ENCODE measurements at regions of chr19 and their contacts with region 1.

Region 1: DNA sequence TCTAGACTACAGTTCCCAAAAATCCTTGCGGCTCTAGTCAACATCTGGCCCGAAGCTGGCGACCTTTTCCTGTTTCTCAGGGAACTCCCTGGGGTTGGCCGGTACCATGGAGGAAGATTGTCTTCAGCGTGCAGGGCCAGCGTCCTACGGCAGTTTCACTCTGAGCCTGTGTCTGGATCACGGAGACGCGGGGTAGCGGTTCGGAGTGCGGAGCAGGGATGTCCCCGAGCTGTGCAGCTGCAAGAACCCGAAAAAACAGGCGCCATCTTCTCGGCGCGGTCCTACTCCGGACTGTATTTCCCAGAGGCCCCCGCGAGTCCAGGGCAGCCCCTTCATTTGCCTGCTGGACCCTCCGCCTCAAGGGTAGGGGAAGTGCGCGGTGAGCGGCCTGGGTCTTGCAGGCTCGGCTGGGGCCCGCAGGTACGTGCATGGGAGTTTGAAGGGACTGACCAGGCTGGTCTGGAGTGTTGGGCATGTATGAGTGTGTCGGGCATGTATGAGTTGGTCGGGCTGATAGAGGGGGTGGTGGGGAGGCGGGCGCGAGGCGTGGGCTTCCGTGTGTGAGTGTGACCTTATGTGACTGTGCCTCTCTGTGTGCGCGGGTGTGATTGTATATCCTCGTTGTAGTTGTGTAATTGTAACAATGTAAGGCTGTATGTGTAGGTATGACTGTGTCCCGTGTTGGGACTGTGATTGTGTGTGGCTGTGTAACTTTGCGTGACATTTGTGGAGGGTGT is at the start of gene ZNF383:
- DNase-seq: peak; percentile 70 to 75 (median 72)
- H3K4me3 ChIP-seq: peak within 1 kb of the TSS; percentile 92 to 100 (median 94)
- H3K4me3 Mint-ChIP-seq: peak within 1 kb of the TSS; percentile 99
- H3K27ac ChIP-seq: peak within 1 kb of the TSS; percentile 71 to 92
- H3K27ac Mint-ChIP-seq: peak within 1 kb of the TSS; percentile 92 to 99 (median 94)
- H3K4me1 ChIP-seq: peaks cover 10 to 16% of the 10 kb centered on the region in 2 donors
- H3K4me1 Mint-ChIP-seq: peaks cover 16% of the 10 kb centered on the region
- H3K27me3 ChIP-seq: no peaks in the 10 kb centered on the region
- H3K27me3 Mint-ChIP-seq: peaks cover 0 to 4% (median 2%) of the 10 kb centered on the region in 3 donors
- CTCF ChIP-seq: no peak
- polyA plus RNA-seq, gene ZNF383: 2.8 to 4.2 (median 3.5) TPM

Region 2: DNA sequence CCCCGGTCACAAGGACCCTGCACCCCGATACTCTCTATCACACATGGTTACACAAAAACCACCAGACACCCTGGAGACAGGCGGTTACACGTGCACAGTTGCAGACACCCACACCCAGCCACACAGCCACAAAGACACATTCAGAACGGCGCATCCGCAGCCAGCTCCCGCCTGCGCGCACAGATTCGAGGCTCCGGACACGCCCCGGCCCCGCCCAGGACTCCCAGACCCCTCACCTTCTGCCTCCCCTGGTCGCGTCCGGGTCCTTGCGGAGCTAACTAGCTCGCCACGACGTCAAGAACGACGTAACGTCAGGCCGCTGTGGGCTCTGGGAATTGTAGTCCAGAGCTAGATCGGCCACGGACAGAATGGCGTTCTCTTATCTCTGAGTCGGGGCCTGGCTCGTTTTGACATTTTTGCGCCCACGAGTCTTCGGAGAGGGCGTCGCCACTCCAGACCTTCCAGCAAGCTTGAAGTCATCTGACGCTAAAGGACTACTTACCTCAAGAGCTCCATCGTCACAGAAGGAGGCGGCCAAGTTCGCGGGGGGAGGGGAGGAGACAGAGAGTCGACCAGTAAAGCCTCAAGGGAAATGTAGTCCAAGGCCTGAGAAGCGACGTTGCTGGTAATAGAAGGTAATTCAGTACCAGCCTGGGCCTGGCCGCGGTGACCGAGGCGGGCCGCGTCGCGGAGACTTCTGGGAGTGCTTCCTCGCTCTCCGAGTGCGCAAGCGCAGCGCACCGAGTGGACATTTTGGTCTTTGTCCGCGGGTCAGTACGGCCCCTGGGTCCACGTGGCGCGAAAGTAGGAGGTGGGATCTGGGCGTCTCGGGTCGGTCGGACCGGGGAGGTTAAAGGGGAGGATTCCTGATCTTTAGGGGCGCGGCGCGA is 1003.4 kb before region 1 on chr19 and contains the starts of genes ZNF146 and ZNF565:
- intact Hi-C with region 1: loop called in 1 of 2 experiments (anchors 10 kb)
- DNase-seq: peak; percentile 96 to 99 (median 96)
- H3K4me3 ChIP-seq: peak within 1 kb of the TSS; percentile 61 to 92 (median 69)
- H3K4me3 Mint-ChIP-seq: no peak within 1 kb of the TSS
- H3K27ac ChIP-seq: peak within 1 kb of the TSS; percentile 72 to 95
- H3K27ac Mint-ChIP-seq: no peak within 1 kb of the TSS
- H3K4me1 ChIP-seq: peaks cover 11 to 18% of the 10 kb centered on the region in 2 donors
- H3K4me1 Mint-ChIP-seq: peaks cover 5% of the 10 kb centered on the region
- H3K27me3 ChIP-seq: no peaks in the 10 kb centered on the region
- H3K27me3 Mint-ChIP-seq: no peaks in the 10 kb centered on the region
- CTCF ChIP-seq: no peak
- polyA plus RNA-seq, gene ZNF146: 12.2 to 26.5 (median 15.8) TPM
- polyA plus RNA-seq, gene ZNF565: 1.5 to 3.5 (median 2.1) TPM

Region 3: DNA sequence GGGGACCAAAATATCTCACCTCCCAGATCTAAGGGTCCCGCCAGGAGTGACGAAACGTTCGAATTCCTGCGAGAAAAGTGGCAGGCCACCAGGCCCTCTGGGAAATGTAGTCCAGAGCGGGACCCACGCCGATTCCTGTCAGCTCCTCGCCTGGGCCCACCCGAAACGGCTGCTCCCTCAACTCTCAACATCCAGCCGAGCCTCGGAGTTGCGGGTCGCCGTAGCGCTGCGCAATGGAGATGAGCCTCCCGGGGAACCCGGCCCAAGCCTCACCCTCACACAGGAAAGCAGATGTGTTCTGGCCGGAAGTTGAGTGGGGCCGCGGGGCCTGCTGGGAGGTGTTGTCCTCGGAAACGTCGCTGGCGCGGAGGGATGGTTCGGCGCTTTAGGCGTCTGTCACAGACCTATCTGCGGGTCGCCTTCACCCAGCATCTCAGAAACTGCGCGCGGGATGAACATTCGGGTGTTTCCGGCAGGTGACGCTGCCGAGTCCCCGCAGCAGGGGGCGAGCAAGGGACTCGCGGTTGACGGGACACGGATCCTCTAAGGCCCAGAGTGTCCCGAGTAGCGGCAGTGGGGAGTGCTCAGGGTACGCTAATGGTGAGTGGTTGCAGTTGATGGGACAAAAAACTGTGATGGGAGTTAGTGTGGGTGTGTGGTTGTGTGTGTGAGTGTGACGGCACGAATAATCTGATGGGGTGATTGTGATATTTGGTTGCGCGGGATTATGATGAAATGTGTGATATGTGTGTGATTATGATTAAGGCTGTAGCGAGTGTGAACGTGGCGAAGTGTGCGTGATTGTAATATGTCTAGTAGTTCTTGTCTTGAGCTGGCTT is 301.8 kb before region 1 on chr19 and contains the starts of genes ZNF568 and ZNF829:
- intact Hi-C with region 1: loop called in 1 of 2 experiments (anchors 10 kb)
- DNase-seq: peak; percentile 62 to 72 (median 69)
- H3K4me3 ChIP-seq: peak within 1 kb of the TSS; percentile 57 to 99 (median 78)
- H3K4me3 Mint-ChIP-seq: peak within 1 kb of the TSS; percentile 96
- H3K27ac ChIP-seq: peak within 1 kb of the TSS; percentile 53 to 84
- H3K27ac Mint-ChIP-seq: peak within 1 kb of the TSS; percentile 79 to 96 (median 90)
- H3K4me1 ChIP-seq: peaks cover 6 to 17% of the 10 kb centered on the region in 2 donors
- H3K4me1 Mint-ChIP-seq: peaks cover 18% of the 10 kb centered on the region
- H3K27me3 ChIP-seq: no peaks in the 10 kb centered on the region
- H3K27me3 Mint-ChIP-seq: peaks cover 0 to 4% (median 2%) of the 10 kb centered on the region in 3 donors
- CTCF ChIP-seq: peak; percentile 66
- polyA plus RNA-seq, gene ZNF568: 0.38 to 0.96 (median 0.79) TPM
- polyA plus RNA-seq, gene ZNF829: 0.05 to 0.14 (median 0.08) TPM

Region 4: DNA sequence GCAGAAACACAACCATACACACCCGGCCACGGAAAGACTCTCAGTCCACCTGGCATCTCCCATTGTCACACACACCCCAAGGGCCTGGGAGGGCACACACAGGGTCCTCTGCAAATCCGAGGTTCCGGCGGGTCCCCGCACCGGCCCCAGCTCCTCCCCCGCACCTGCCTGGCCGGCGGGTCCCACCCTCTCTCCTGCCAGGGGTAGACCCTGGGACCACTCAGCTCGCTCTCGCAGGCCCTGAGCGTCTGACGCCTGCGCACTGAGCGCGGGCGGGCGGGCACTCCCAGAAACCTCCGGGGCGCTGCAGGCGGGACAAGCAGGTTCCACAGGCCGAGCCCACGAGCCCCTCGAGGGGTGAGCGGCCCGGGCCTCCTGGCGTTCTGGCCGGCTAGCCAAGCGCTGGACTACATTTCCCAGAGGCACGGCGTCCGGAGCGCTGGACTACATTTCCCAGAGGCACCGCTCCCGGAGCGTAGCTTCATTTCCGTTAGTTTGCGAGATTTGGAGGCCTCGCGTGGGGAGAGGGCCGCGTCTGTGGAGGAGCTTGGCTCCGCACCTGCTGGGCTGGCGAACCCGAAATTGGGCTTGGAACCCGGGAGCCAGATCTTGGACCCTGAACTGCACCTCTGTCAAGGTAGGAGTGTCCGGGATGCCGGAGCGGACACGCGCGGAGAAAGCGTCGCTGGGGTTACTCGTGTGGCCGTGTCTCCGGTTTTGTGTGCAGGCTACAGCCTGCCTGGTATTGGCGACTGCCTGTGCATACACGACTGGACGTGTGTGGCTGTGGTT is 139.9 kb before region 1 on chr19 and contains the start of gene ZNF420:
- intact Hi-C with region 1: loop called in 1 of 2 experiments (anchors 10 kb)
- DNase-seq: peak; percentile 82 to 90 (median 85)
- H3K4me3 ChIP-seq: peak within 1 kb of the TSS; percentile 57 to 94 (median 89)
- H3K4me3 Mint-ChIP-seq: peak within 1 kb of the TSS; percentile 99 to 100
- H3K27ac ChIP-seq: peak within 1 kb of the TSS; percentile 40 to 75
- H3K27ac Mint-ChIP-seq: peak within 1 kb of the TSS; percentile 62 to 96 (median 85)
- H3K4me1 ChIP-seq: peaks cover 16 to 19% of the 10 kb centered on the region in 2 donors
- H3K4me1 Mint-ChIP-seq: peaks cover 20% of the 10 kb centered on the region
- H3K27me3 ChIP-seq: no peaks in the 10 kb centered on the region
- H3K27me3 Mint-ChIP-seq: peaks cover 0 to 5% (median 0%) of the 10 kb centered on the region in 3 donors
- CTCF ChIP-seq: no peak
- polyA plus RNA-seq, gene ZNF420: 1.4 to 2.5 (median 1.8) TPM

Region 5: DNA sequence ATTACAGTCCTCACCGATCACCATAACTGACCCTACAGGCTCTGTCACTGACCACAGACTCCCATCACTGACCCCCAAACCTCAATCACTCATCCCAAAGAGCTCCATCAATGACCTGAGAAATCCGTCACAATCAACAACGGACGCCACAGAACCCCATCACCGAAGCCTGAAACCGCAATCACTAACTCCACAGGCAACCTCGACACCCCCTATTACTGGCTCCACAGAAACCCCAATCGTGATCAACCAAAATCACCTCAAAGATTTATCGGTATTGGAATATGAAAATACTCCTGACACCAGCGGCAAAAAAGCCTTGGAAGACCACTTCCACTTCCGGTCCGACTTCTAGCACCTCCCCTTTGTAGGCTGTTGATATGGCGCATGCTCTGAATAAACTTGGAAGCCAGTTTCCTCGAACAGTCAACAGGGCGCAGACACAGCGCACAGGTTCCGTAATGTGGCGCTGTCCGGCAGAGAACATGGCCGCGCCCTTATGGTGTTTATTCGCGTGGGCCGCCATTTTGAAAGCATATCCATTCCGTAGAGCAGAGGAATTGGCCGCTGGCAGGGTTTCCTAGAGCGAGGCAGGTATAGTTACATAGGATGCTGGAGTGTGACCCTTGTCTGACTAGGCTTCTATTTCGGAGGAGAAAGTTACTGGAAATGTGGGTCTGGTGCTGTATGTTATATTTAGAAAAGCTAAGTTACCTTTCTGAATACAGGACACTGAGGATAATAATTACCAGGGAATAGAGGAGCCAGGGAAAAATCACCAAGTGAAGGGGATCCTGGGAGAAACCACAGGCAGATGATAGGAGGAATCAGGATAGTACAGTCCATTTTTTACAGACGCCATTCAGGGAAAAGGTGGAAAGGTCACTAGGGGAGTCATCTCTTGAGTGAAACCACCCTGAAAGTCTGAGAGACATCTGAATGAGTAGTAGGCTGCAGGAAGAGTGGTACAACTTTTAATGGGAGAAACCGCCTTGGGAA is 45.4 kb before region 1 on chr19 and contains the start of gene ZNF585A:
- intact Hi-C with region 1: loop called in 1 of 2 experiments (anchors 2 kb)
- DNase-seq: peak; percentile 94 to 98 (median 97)
- H3K4me3 ChIP-seq: peak within 1 kb of the TSS; percentile 70 to 100 (median 98)
- H3K4me3 Mint-ChIP-seq: no peak within 1 kb of the TSS
- H3K27ac ChIP-seq: peak within 1 kb of the TSS; percentile 46 to 87
- H3K27ac Mint-ChIP-seq: no peak within 1 kb of the TSS
- H3K4me1 ChIP-seq: peaks cover 5 to 17% of the 10 kb centered on the region in 2 donors
- H3K4me1 Mint-ChIP-seq: no peaks in the 10 kb centered on the region
- H3K27me3 ChIP-seq: no peaks in the 10 kb centered on the region
- H3K27me3 Mint-ChIP-seq: peaks cover 0 to 1% (median 0%) of the 10 kb centered on the region in 3 donors
- CTCF ChIP-seq: no peak
- polyA plus RNA-seq, gene ZNF585A: 6.4 to 25.5 (median 23.2) TPM

Region 6: DNA sequence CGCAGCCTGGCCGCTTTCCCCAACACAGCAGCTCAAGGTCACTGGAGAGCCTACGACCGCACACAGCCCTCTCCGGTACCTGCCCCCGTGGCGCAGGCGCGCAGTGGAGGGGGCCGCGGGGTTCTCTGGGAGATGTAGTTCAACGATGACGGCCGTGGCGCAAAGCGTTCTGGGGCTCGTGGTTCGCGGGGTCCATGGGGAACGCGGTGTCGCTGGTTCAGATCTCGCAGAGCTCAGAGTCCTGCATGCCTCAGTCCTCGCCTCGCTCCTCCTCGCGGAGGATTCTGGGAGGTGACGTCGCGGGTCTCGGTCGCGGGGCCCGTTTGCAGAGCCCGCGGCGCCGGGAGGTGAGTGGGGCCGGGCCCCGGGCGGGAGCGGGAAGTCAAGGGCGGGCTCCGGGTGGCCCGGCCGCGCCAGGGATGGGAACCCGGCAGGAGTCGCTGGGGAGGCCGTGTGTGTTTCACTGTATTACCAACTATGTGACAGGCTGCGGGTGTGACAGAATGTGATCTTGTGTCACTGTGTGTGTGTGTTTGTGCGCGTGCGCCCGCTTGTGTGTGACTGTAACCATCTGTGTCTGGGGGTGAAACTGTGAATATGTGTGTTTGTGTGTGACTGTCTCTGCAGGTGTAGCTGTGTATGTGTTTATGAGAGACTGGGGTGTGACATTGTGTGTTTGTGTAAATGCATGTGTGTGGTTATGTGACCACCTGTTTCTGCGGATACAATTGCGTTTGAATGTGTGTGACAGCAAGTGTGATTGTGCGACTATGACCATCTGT is 153.0 kb after region 1 on chr19 and contains the start of gene ZNF527:
- intact Hi-C with region 1: loop called (anchors 10 kb)
- DNase-seq: peak; percentile 89 to 93 (median 91)
- H3K4me3 ChIP-seq: peak within 1 kb of the TSS; percentile 62 to 79 (median 72)
- H3K4me3 Mint-ChIP-seq: peak within 1 kb of the TSS; percentile 99 to 100
- H3K27ac ChIP-seq: peak within 1 kb of the TSS; percentile 59 to 73
- H3K27ac Mint-ChIP-seq: peak within 1 kb of the TSS; percentile 95 to 98 (median 96)
- H3K4me1 ChIP-seq: peaks cover 8% of the 10 kb centered on the region in 2 donors
- H3K4me1 Mint-ChIP-seq: peaks cover 9% of the 10 kb centered on the region
- H3K27me3 ChIP-seq: no peaks in the 10 kb centered on the region
- H3K27me3 Mint-ChIP-seq: peaks cover 0 to 2% (median 0%) of the 10 kb centered on the region in 3 donors
- CTCF ChIP-seq: no peak
- polyA plus RNA-seq, gene ZNF527: 0.83 to 1.6 (median 1.3) TPM